PC-9 (cell line): ENCODE measurements at regions of chr14 and their contacts with region 1.

Region 1: GRCh38 chr14:49950275-49951228 is 57.7 kb downstream of the ARF6 start:
- DNase-seq: peak; percentile 76 to 93
- H3K4me3 ChIP-seq: no peak overlapping the region
- H3K27ac ChIP-seq: peak overlapping the region; percentile 83
- H3K4me1 ChIP-seq: peaks cover 83% of the 10 kb centered on the region
- H3K27me3 ChIP-seq: no peaks in the 10 kb centered on the region
- CTCF ChIP-seq: no peak

Region 2: DNA sequence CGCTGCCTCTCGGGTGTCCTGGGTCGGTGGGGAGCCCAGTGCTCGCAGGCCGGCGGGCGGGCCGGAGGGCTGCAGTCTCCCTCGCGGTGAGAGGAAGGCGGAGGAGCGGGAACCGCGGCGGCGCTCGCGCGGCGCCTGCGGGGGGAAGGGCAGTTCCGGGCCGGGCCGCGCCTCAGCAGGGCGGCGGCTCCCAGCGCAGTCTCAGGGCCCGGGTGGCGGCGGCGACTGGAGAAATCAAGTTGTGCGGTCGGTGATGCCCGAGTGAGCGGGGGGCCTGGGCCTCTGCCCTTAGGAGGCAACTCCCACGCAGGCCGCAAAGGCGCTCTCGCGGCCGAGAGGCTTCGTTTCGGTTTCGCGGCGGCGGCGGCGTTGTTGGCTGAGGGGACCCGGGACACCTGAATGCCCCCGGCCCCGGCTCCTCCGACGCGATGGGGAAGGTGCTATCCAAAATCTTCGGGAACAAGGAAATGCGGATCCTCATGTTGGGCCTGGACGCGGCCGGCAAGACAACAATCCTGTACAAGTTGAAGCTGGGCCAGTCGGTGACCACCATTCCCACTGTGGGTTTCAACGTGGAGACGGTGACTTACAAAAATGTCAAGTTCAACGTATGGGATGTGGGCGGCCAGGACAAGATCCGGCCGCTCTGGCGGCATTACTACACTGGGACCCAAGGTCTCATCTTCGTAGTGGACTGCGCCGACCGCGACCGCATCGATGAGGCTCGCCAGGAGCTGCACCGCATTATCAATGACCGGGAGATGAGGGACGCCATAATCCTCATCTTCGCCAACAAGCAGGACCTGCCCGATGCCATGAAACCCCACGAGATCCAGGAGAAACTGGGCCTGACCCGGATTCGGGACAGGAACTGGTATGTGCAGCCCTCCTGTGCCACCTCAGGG is 57.0 kb before region 1 on chr14:
- CTCF ChIA-PET with region 1: no interaction called
- POLR2A ChIA-PET with region 1: no interaction called
- intact Hi-C with region 1: no loop called
- DNase-seq: peak in 1 of 2 experiments; percentile 51
- H3K4me3 ChIP-seq: peak overlapping the region; percentile 99
- H3K27ac ChIP-seq: peak overlapping the region; percentile 96
- H3K4me1 ChIP-seq: peaks cover 36% of the 10 kb centered on the region
- H3K27me3 ChIP-seq: no peaks in the 10 kb centered on the region
- CTCF ChIP-seq: no peak

Region 3: GRCh38 chr14:49908432-49908781 is 42.1 kb before region 1 on chr14:
- CTCF ChIA-PET with region 1: no interaction called
- POLR2A ChIA-PET with region 1: interaction called, 3 read pairs
- intact Hi-C with region 1: loop called (anchors 2 kb)
- DNase-seq: peak in 1 of 2 experiments; percentile 85
- H3K4me3 ChIP-seq: no peak overlapping the region
- H3K27ac ChIP-seq: peak overlapping the region; percentile 86
- H3K4me1 ChIP-seq: peaks cover 50% of the 10 kb centered on the region
- H3K27me3 ChIP-seq: no peaks in the 10 kb centered on the region
- CTCF ChIP-seq: no peak

Region 4: DNA sequence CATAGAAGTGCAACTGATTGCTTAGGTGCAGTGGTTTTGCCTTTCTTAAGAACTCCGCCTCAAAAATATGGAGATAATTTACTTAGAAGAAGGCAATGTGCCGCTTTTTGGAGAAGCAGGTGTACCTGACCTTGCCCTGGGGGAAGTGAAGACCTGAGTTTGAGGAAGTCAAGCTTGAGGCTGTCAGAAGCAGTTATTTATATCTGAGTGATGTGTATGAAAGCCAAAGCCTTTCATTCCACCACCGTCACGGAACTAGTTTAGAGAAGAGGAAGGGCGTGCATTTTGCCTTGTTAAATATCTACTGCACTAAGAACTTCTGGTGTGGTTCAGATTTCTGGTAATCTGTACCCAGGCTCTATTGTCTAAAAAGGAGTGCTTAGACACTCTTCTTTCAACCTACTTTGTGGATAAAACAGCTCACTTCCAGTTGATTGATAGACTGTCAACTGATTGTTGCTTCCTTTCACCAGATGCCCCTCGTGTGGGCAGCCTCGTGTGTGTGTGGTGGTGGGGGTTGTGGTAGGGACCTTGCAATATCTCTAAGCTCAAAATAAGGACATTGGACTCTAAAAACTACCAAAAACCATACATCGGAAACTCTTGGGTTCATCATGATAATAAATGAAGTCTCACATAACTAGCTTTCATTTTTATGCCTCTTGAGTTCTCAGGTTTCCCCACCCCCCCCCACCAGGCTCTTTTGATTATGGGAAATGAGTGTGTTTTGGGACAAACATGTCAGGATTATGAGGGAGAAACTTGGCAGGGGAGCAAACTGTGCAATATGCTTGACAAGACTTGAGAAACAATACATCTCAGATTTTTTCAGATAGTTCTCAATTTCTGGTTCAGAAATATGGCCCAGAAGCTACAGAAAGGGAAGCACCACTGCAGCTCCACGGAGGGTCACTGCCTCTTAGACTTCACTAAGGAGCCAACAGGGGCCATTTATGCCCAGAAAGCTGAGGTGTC is 20.9 kb after region 1 on chr14:
- CTCF ChIA-PET with region 1: no interaction called
- POLR2A ChIA-PET with region 1: interaction called, 8 read pairs
- intact Hi-C with region 1: loop called (anchors 2 kb)
- DNase-seq: no peak
- H3K4me3 ChIP-seq: peak overlapping the region; percentile 40; the same call in 1 of the 2 replicates
- H3K27ac ChIP-seq: peak overlapping the region; percentile 97
- H3K4me1 ChIP-seq: peaks cover 81% of the 10 kb centered on the region
- H3K27me3 ChIP-seq: no peaks in the 10 kb centered on the region
- CTCF ChIP-seq: no peak

Region 5: GRCh38 chr14:50023671-50024490 is 73.3 kb after region 1 on chr14:
- CTCF ChIA-PET with region 1: no interaction called
- POLR2A ChIA-PET with region 1: no interaction called
- intact Hi-C with region 1: no loop called
- DNase-seq: no peak
- H3K4me3 ChIP-seq: no peak overlapping the region; the same call in 1 of the 2 replicates
- H3K27ac ChIP-seq: peak overlapping the region; percentile 77
- H3K4me1 ChIP-seq: peaks cover 22% of the 10 kb centered on the region
- H3K27me3 ChIP-seq: no peaks in the 10 kb centered on the region
- CTCF ChIP-seq: no peak

Region 6: GRCh38 chr14:50099335-50099734 is 148.8 kb after region 1 on chr14:
- CTCF ChIA-PET with region 1: no interaction called
- POLR2A ChIA-PET with region 1: no interaction called
- intact Hi-C with region 1: no loop called
- DNase-seq: peak; percentile 25 to 68
- H3K4me3 ChIP-seq: no peak overlapping the region
- H3K27ac ChIP-seq: no peak overlapping the region
- H3K4me1 ChIP-seq: peaks cover 34% of the 10 kb centered on the region
- H3K27me3 ChIP-seq: no peaks in the 10 kb centered on the region
- CTCF ChIP-seq: no peak

Region 7: GRCh38 chr14:50109342-50109741 is 158.8 kb after region 1 on chr14:
- CTCF ChIA-PET with region 1: no interaction called
- POLR2A ChIA-PET with region 1: interaction called, 5 read pairs
- intact Hi-C with region 1: loop called (anchors 5 kb)
- DNase-seq: no peak
- H3K4me3 ChIP-seq: no peak overlapping the region
- H3K27ac ChIP-seq: no peak overlapping the region
- H3K4me1 ChIP-seq: peaks cover 7% of the 10 kb centered on the region; the same call in 1 of the 2 replicates
- H3K27me3 ChIP-seq: no peaks in the 10 kb centered on the region
- CTCF ChIP-seq: peak; percentile 34